Activated CD8-positive, alpha-beta T cell treated with anti-CD3 and anti-CD28 coated beads for 36 hours (primary cell): ENCODE measurements at regions of chr11 and their contacts with region 1.

Region 1: DNA sequence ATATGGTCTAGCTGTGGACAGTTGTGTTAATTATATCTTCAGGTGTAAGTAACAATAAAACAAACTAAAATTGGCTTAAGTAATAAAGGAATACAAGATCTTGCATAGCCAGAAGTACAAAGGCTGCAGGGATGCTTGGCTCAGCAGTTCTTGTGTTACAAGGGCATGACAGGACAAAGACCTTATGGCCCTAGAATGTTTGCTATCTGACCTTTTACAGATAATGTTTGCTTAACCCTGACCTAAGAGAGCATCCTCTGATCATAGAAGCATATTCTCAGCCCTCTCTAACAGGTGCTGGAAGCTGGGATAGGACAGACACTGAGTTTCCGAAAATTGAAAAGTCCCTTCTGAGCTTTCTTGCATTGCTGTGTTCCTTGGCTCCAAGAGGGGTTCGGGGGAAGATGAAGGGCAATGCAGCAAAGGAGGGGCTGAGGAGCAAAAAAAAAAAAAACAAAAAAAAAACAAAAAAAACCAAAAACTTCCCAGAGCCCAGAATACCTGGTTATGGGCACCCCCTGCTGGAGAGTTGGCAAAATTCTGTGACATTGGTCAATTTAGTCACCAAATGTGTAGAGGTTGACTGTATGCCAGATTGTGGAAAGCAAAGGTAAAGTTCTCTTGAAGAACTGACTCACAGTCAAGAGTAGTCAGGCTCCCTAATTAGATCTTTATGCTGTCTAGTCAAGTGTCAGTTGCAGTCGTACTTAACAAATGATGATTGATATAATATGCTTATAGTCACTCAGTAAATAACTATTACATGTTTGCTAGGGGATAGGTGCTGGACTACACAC is 10.4 kb upstream of the HIKESHI start:
- DNase-seq: peak; percentile 85
- ATAC-seq: peak; percentile 43
- H3K4me3 Mint-ChIP-seq: no peak overlapping the region
- H3K27ac Mint-ChIP-seq: peak overlapping the region; percentile 83
- H3K4me1 Mint-ChIP-seq: peaks cover 59% of the 10 kb centered on the region
- H3K27me3 Mint-ChIP-seq: peaks cover 1% of the 10 kb centered on the region
- CTCF ChIP-seq: peak; percentile 86

Region 2: DNA sequence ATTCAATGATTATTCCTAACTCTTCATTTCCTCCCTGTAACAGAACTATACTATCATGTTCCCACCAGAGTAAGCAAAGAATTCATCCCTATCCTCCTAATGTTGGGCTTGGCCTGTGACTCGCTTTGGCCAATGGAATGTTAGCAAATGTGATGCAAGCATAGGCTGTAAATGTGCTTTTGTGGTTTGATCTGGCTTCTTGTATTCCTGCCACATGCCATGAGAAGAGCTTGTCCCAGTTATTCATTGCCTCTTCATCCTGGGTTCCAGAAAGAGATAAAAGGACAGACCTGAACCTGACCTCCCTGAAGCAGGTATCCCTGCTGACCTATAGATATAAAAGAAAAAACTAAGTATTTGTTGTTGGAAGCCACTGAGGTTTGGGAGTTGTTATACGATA is 531.7 kb before region 1 on chr11:
- CTCF ChIA-PET with region 1: no interaction called
- POLR2A ChIA-PET with region 1: no interaction called
- intact Hi-C with region 1: loop called (anchors 10 kb)
- DNase-seq: no peak
- ATAC-seq: no peak
- H3K4me3 Mint-ChIP-seq: no peak overlapping the region
- H3K27ac Mint-ChIP-seq: no peak overlapping the region
- H3K4me1 Mint-ChIP-seq: peaks cover 74% of the 10 kb centered on the region
- H3K27me3 Mint-ChIP-seq: no peaks in the 10 kb centered on the region
- CTCF ChIP-seq: no peak

Region 3: GRCh38 chr11:85947431-85948272 is 344.0 kb before region 1 on chr11:
- CTCF ChIA-PET with region 1: interaction called, 5 read pairs
- POLR2A ChIA-PET with region 1: interaction called, 3 read pairs
- intact Hi-C with region 1: loop called (anchors 5 kb)
- DNase-seq: peak; percentile 60
- ATAC-seq: peak; percentile 76
- H3K4me3 Mint-ChIP-seq: peak overlapping the region; percentile 3
- H3K27ac Mint-ChIP-seq: peak overlapping the region; percentile 83
- H3K4me1 Mint-ChIP-seq: peaks cover 40% of the 10 kb centered on the region
- H3K27me3 Mint-ChIP-seq: no peaks in the 10 kb centered on the region
- CTCF ChIP-seq: no peak

Region 4: DNA sequence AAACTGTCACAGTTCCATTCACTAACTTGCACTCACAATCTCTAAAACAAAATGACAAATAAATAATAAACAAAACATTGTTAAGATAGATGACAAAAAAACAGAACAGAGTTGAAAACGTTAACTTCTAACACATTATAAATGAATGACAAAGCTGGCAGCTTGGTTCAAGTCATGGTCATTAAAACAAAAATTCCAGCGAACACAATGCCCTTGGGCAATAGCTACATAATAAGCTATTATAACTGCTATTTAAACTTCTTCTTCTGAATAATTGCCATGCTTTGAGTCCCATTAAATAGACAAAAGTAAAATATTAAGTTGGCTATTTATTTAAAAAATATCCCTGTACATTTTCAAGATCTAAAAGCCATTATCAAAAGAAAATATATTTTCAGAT is 277.4 kb before region 1 on chr11:
- CTCF ChIA-PET with region 1: no interaction called
- POLR2A ChIA-PET with region 1: no interaction called
- intact Hi-C with region 1: no loop called
- DNase-seq: no peak
- ATAC-seq: no peak
- H3K4me3 Mint-ChIP-seq: no peak overlapping the region
- H3K27ac Mint-ChIP-seq: no peak overlapping the region
- H3K4me1 Mint-ChIP-seq: peaks cover 20% of the 10 kb centered on the region
- H3K27me3 Mint-ChIP-seq: no peaks in the 10 kb centered on the region
- CTCF ChIP-seq: no peak

Region 5: GRCh38 chr11:86068951-86069407 is 222.7 kb before region 1 on chr11 and contains the start of gene PICALM:
- CTCF ChIA-PET with region 1: no interaction called
- POLR2A ChIA-PET with region 1: no interaction called
- intact Hi-C with region 1: loop called (anchors 5 kb)
- DNase-seq: peak; percentile 98
- ATAC-seq: peak; percentile 91
- H3K4me3 Mint-ChIP-seq: peak within 1 kb of the TSS; percentile 100
- H3K27ac Mint-ChIP-seq: peak within 1 kb of the TSS; percentile 98
- H3K4me1 Mint-ChIP-seq: peaks cover 21% of the 10 kb centered on the region
- H3K27me3 Mint-ChIP-seq: no peaks in the 10 kb centered on the region
- CTCF ChIP-seq: no peak
- total RNA-seq, gene PICALM: 57.5 to 61.2 TPM

Region 6: DNA sequence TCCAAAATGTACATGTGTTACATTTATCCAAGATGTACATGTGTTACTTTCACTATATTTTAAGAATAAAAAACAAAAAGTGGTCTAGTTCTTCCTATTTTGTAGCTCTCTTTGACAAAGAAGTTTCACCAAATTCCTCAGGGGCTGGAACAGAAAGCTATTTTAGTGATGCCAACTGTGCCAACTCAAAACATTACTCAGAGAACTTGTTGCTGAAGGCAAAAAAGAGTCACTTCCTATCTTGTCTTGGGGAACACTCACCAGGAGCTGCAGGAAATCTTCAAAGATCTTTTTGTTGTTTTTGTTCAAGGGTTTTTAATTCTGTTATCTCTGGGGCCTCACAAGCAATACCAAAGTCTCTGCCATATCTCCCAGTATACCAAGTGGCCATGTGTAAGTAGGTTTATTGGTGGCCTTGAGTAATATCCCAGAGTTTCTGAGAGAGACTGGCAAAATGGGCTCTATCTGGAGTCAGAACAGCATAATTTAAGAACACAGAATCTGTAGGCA is 60.7 kb before region 1 on chr11:
- CTCF ChIA-PET with region 1: interaction called, 5 read pairs
- POLR2A ChIA-PET with region 1: interaction called, 3 read pairs
- intact Hi-C with region 1: loop called (anchors 5 kb)
- DNase-seq: no peak
- ATAC-seq: no peak
- H3K4me3 Mint-ChIP-seq: peak overlapping the region; percentile 19
- H3K27ac Mint-ChIP-seq: peak overlapping the region; percentile 64
- H3K4me1 Mint-ChIP-seq: peaks cover 65% of the 10 kb centered on the region
- H3K27me3 Mint-ChIP-seq: no peaks in the 10 kb centered on the region
- CTCF ChIP-seq: no peak

Region 7: DNA sequence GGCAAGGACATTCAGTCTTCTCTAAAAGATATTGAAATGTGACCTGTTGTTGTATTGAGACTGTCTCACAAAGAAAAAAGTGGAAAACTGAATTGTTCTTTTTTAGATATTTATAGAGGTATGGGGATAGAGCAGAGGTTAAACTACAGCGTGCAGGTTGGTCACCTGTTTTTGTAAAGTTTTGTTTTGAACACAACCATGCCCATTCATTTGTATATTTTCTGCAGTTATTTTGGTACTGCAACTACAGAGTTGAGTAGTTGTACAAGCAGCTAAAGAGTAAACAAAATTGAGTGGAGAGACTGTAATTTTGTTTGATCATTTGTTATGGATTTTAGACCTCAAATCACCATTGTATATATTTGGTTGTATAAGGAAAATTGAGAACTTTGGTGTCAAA is 35.8 kb before region 1 on chr11:
- CTCF ChIA-PET with region 1: interaction called, 10 read pairs
- POLR2A ChIA-PET with region 1: interaction called, 8 read pairs
- intact Hi-C with region 1: no loop called
- DNase-seq: no peak
- ATAC-seq: no peak
- H3K4me3 Mint-ChIP-seq: no peak overlapping the region
- H3K27ac Mint-ChIP-seq: peak overlapping the region; percentile 63
- H3K4me1 Mint-ChIP-seq: peaks cover 32% of the 10 kb centered on the region
- H3K27me3 Mint-ChIP-seq: no peaks in the 10 kb centered on the region
- CTCF ChIP-seq: no peak